Right cardiac atrium (tissue), 5 donors: ENCODE measurements at regions of chr10 and their contacts with region 1.

Region 1: DNA sequence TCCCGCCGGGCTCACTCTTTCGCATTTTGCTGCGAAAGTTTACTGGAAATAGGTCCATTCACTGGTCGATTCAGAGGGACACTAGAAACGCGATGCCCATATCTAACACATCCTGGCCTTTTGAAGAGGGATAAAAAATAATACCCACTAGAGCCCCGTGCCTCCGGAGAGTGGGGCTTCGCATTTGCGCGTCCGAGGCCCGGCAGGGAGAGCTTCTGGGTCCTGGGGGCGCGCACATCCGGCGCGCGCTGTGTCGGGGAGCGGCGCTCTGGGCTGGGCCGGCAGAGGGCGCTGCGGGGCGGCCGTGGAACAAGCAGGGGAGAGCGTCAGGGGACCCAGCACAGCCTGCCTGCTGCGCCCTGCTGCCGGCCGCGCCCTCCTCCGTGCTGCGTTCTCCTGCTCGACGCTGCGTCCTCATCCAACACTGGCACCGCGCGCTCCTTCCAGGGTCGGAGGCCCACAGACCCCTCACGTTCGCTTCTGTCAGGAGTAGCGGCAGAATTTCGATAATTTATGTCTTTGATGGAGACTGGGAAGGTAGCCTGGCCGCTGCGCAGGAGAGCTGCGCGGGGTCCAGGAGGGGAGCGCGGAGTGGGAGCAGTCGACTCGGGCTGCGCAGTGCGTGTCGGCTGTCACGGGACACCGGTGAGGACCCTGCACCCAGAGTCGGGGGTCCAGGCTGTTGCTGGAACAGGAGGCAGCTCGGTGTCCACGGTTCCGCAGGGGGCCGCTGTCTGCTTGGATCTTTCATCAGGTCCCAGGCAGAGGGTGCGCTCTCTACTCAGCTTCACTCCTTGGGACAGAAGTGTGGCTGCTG is 41.5 kb upstream of the ZNF32 start:
- DNase-seq: peak; percentile 90 to 96 (median 96)
- ATAC-seq: peak; percentile 97 to 98
- H3K4me3 ChIP-seq: peak overlapping the region; percentile 35
- H3K27ac ChIP-seq: peak overlapping the region; percentile 58
- H3K4me1 ChIP-seq: peaks cover 2% of the 10 kb centered on the region
- H3K27me3 ChIP-seq: no peaks in the 10 kb centered on the region

Region 2: GRCh38 chr10:43606322-43607198 is 83.6 kb before region 1 on chr10 and contains the start of gene ZNF485:
- intact Hi-C with region 1: no loop called
- DNase-seq: peak; percentile 80 to 92 (median 91)
- ATAC-seq: peak; percentile 98 to 99
- H3K4me3 ChIP-seq: peak within 1 kb of the TSS; percentile 83
- H3K27ac ChIP-seq: no peak within 1 kb of the TSS
- H3K4me1 ChIP-seq: no peaks in the 10 kb centered on the region
- H3K27me3 ChIP-seq: no peaks in the 10 kb centered on the region
- total RNA-seq, gene ZNF485: 1.7 to 2.6 (median 2.0) TPM

Region 3: GRCh38 chr10:43739161-43739560 is 49.0 kb after region 1 on chr10:
- intact Hi-C with region 1: no loop called
- DNase-seq: no peak
- ATAC-seq: no peak
- H3K4me3 ChIP-seq: no peak overlapping the region
- H3K27ac ChIP-seq: no peak overlapping the region
- H3K4me1 ChIP-seq: no peaks in the 10 kb centered on the region
- H3K27me3 ChIP-seq: no peaks in the 10 kb centered on the region

Region 4: DNA sequence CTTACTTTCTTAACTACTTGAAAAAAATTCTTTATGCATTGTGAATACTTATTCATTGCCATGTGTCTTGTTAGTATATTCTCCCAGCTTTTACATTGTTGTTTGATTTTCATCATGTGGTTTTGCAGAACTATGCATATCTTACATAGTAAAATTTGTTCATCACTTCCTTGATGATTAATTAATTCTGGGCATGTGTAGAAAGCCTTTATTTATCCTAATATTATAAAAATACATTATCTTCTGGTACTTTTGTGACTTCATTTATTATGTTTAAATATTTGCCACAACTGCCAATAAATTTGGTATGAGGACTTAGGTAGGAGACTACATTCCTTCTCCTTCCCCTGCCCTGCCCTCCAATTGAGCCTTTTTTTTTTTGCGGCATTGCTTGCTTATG is 124.5 kb after region 1 on chr10:
- intact Hi-C with region 1: no loop called
- DNase-seq: no peak
- ATAC-seq: no peak
- H3K4me3 ChIP-seq: no peak overlapping the region
- H3K27ac ChIP-seq: no peak overlapping the region
- H3K4me1 ChIP-seq: peaks cover 5% of the 10 kb centered on the region
- H3K27me3 ChIP-seq: no peaks in the 10 kb centered on the region

Region 5: DNA sequence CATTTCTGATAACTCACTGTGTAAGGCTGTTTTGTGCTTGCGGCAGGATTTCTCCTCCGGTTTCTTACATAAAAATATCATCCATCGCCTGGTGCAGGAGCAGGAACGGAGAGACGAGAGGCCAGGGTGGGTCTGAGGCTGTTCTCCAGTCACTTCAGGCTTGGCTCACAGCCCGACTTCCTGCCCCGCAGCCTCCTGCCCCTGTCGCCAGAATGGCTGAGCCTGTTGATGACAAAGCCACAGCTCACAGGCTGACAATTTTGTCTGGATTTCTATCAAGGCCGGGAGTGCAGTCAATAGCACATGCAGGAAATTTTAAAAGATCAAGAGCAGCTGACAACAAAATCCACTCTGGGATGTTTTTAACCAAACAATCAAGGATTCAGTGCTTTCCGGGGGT is 188.2 kb after region 1 on chr10:
- intact Hi-C with region 1: loop called in 1 of 4 experiments (anchors 10 kb)
- DNase-seq: peak; percentile 80 to 88 (median 87)
- ATAC-seq: peak; percentile 74 to 90
- H3K4me3 ChIP-seq: no peak overlapping the region
- H3K27ac ChIP-seq: peak overlapping the region; percentile 59
- H3K4me1 ChIP-seq: peaks cover 11% of the 10 kb centered on the region
- H3K27me3 ChIP-seq: no peaks in the 10 kb centered on the region

Region 6: GRCh38 chr10:44046605-44047004 is 356.4 kb after region 1 on chr10:
- intact Hi-C with region 1: loop called in 1 of 4 experiments (anchors 5 kb)
- DNase-seq: peak in 1 of 3 donors; percentile 53
- ATAC-seq: peak; percentile 32 to 56
- H3K4me3 ChIP-seq: no peak overlapping the region
- H3K27ac ChIP-seq: no peak overlapping the region
- H3K4me1 ChIP-seq: no peaks in the 10 kb centered on the region
- H3K27me3 ChIP-seq: no peaks in the 10 kb centered on the region

Region 7: GRCh38 chr10:44310762-44311562 is 620.8 kb after region 1 on chr10:
- intact Hi-C with region 1: loop called (anchors 2 to 10 kb)
- DNase-seq: peak; percentile 89 to 96 (median 96)
- ATAC-seq: peak; percentile 97 to 98
- H3K4me3 ChIP-seq: peak overlapping the region; percentile 16
- H3K27ac ChIP-seq: no peak overlapping the region
- H3K4me1 ChIP-seq: no peaks in the 10 kb centered on the region
- H3K27me3 ChIP-seq: no peaks in the 10 kb centered on the region